CD4-positive, alpha-beta memory T cell (primary cell): ENCODE measurements at regions of chr1 and their contacts with region 1.

Region 1: DNA sequence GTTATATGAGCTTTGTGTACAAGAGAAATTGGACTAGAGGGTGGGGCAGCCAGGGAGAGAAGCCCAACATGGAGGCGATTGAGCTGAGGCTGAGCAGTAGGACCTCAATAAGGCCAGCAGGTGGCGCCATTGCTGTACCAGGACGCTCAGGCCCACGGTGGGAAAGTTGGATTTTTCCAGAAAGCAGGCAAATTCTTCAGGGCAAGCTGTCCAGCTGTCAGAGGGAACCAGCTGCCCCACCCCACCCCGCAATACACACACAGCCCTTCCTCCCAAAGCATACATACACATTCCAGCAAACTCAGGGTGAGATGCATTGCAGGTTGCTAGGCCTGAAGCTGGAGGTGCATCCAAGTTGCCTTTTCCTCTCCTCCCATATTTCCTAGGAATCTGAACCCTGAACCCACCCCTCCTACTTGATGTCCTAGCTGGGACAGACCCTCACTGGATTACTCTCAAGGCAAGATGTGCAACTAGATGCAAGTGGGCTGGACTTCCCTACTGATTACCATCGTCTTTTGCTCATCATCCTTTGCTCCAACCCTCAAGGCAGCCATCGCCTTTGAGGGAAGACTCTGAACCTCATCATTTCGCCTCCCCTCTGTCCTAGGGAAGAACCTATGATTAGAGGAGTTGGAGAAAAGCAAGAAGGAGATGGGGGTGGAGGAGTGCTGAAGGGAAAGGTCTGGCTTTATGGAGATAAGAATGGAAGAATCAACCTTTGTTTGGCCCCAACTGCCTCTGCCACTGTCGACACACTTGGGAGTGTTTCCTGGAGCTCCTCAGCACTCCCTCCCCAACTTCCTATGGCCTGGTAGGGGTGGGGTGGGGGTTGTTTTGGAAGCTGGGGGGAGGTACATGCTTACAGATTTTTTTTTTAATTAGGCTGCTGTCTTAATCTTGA is 25.5 kb downstream of the CD34 start:
- DNase-seq: peak; percentile 67 to 72 (median 69)
- H3K4me3 ChIP-seq: no peak overlapping the region
- H3K4me3 Mint-ChIP-seq: peak overlapping the region in 4 of 8 donors; percentile 13 to 58 (median 26)
- H3K27ac ChIP-seq: no peak overlapping the region
- H3K27ac Mint-ChIP-seq: peak overlapping the region in 6 of 7 donors; percentile 71 to 98 (median 78)
- H3K4me1 ChIP-seq: peaks cover 32% of the 10 kb centered on the region
- H3K4me1 Mint-ChIP-seq: peaks cover 25 to 39% (median 34%) of the 10 kb centered on the region in 4 donors
- H3K27me3 ChIP-seq: no peaks in the 10 kb centered on the region
- H3K27me3 Mint-ChIP-seq: peaks cover 1 to 14% of the 10 kb centered on the region in 2 donors

Region 2: GRCh38 chr1:207811920-207812720 is 73.3 kb before region 1 on chr1:
- CTCF ChIA-PET with region 1: interaction called, 10 read pairs
- POLR2A ChIA-PET with region 1: no interaction called
- intact Hi-C with region 1: no loop called
- DNase-seq: no peak
- H3K4me3 ChIP-seq: no peak overlapping the region
- H3K4me3 Mint-ChIP-seq: peak overlapping the region in 1 of 8 donors; percentile 17
- H3K27ac ChIP-seq: no peak overlapping the region
- H3K27ac Mint-ChIP-seq: peak overlapping the region in 6 of 7 donors; percentile 13 to 85 (median 61)
- H3K4me1 ChIP-seq: peaks cover 75% of the 10 kb centered on the region
- H3K4me1 Mint-ChIP-seq: peaks cover 51 to 90% (median 74%) of the 10 kb centered on the region in 4 donors
- H3K27me3 ChIP-seq: no peaks in the 10 kb centered on the region
- H3K27me3 Mint-ChIP-seq: no peaks in the 10 kb centered on the region

Region 3: GRCh38 chr1:207863893-207864535 is 21.4 kb before region 1 on chr1:
- CTCF ChIA-PET with region 1: interaction called, 402 read pairs
- POLR2A ChIA-PET with region 1: interaction called, 157 read pairs
- intact Hi-C with region 1: loop called (anchors 2 kb)
- DNase-seq: peak; percentile 43 to 75 (median 49)
- H3K4me3 ChIP-seq: no peak overlapping the region
- H3K4me3 Mint-ChIP-seq: peak overlapping the region; percentile 45 to 89 (median 72)
- H3K27ac ChIP-seq: peak overlapping the region; percentile 48
- H3K27ac Mint-ChIP-seq: peak overlapping the region; percentile 73 to 95 (median 86)
- H3K4me1 ChIP-seq: peaks cover 88% of the 10 kb centered on the region
- H3K4me1 Mint-ChIP-seq: peaks cover 55 to 74% (median 60%) of the 10 kb centered on the region in 4 donors
- H3K27me3 ChIP-seq: no peaks in the 10 kb centered on the region
- H3K27me3 Mint-ChIP-seq: no peaks in the 10 kb centered on the region

Region 4: GRCh38 chr1:207897188-207897587 is 11.8 kb after region 1 on chr1:
- CTCF ChIA-PET with region 1: interaction called, 44 read pairs
- POLR2A ChIA-PET with region 1: no interaction called
- intact Hi-C with region 1: no loop called
- DNase-seq: no peak
- H3K4me3 ChIP-seq: no peak overlapping the region
- H3K4me3 Mint-ChIP-seq: no peak overlapping the region
- H3K27ac ChIP-seq: no peak overlapping the region
- H3K27ac Mint-ChIP-seq: no peak overlapping the region
- H3K4me1 ChIP-seq: no peaks in the 10 kb centered on the region
- H3K4me1 Mint-ChIP-seq: no peaks in the 10 kb centered on the region
- H3K27me3 ChIP-seq: no peaks in the 10 kb centered on the region
- H3K27me3 Mint-ChIP-seq: peaks cover 0 to 3% of the 10 kb centered on the region in 2 donors

Region 5: GRCh38 chr1:207917080-207917479 is 31.7 kb after region 1 on chr1:
- CTCF ChIA-PET with region 1: interaction called, 13 read pairs
- POLR2A ChIA-PET with region 1: no interaction called
- intact Hi-C with region 1: no loop called
- DNase-seq: no peak
- H3K4me3 ChIP-seq: no peak overlapping the region
- H3K4me3 Mint-ChIP-seq: no peak overlapping the region
- H3K27ac ChIP-seq: no peak overlapping the region
- H3K27ac Mint-ChIP-seq: no peak overlapping the region
- H3K4me1 ChIP-seq: no peaks in the 10 kb centered on the region
- H3K4me1 Mint-ChIP-seq: peaks cover 0 to 3% (median 0%) of the 10 kb centered on the region in 4 donors
- H3K27me3 ChIP-seq: peaks cover 3% of the 10 kb centered on the region
- H3K27me3 Mint-ChIP-seq: peaks cover 29 to 33% of the 10 kb centered on the region in 2 donors

Region 6: DNA sequence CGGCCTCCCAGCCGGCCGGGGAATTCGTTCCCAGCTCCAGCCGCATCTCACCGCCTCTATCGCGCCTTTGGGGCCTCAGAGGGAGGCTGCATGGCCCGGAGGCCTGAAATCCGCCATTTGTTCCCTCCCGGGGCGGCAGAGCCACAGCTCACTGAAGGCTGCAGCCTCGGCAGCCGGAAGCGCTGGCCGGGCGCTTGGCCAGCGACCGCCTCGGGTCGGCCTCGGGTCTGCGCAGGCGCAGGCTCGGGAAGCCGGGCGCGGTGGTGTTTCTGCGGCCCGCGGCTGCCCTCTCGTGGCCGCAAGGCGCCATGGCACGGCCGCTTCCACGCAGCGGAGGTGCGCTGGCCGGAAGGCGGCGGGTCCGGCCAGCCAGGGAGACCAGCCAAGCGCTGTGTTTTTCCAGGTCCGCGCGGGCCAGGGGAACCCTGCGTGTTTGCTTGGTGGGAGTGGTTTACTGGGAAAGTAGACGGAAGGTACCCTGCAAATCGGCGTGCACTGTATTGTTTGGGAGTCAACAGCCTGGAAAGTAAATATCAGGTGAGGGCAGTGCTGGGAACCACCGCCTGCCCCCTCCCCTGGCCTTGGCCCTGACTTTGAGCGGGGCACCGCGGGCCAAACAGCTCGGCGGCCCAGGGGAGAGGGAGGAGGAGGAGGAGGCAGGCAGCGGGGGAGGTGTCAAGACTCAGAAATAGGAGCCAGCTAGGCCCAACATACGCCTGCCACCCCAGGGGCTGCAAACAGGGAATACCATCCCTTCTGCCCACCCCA is 78.2 kb after region 1 on chr1:
- CTCF ChIA-PET with region 1: interaction called, 119 read pairs
- POLR2A ChIA-PET with region 1: interaction called, 28 read pairs
- intact Hi-C with region 1: loop called (anchors 1 kb)
- DNase-seq: peak; percentile 66 to 85 (median 80)
- H3K4me3 ChIP-seq: peak overlapping the region; percentile 27 to 86
- H3K4me3 Mint-ChIP-seq: peak overlapping the region; percentile 81 to 93 (median 87)
- H3K27ac ChIP-seq: peak overlapping the region; percentile 48
- H3K27ac Mint-ChIP-seq: peak overlapping the region in 2 of 7 donors; percentile 17 to 33
- H3K4me1 ChIP-seq: peaks cover 21% of the 10 kb centered on the region
- H3K4me1 Mint-ChIP-seq: peaks cover 4 to 22% (median 14%) of the 10 kb centered on the region in 4 donors
- H3K27me3 ChIP-seq: peaks cover 14% of the 10 kb centered on the region
- H3K27me3 Mint-ChIP-seq: peaks cover 19 to 27% of the 10 kb centered on the region in 2 donors

Region 7: GRCh38 chr1:207997486-207998268 is 112.3 kb after region 1 on chr1:
- CTCF ChIA-PET with region 1: interaction called, 26 read pairs
- POLR2A ChIA-PET with region 1: no interaction called
- intact Hi-C with region 1: no loop called
- DNase-seq: peak in 4 of 5 donors; percentile 20 to 36 (median 30)
- H3K4me3 ChIP-seq: no peak overlapping the region
- H3K4me3 Mint-ChIP-seq: no peak overlapping the region
- H3K27ac ChIP-seq: no peak overlapping the region
- H3K27ac Mint-ChIP-seq: no peak overlapping the region
- H3K4me1 ChIP-seq: no peaks in the 10 kb centered on the region
- H3K4me1 Mint-ChIP-seq: no peaks in the 10 kb centered on the region
- H3K27me3 ChIP-seq: no peaks in the 10 kb centered on the region
- H3K27me3 Mint-ChIP-seq: peaks cover 4% of the 10 kb centered on the region in 2 donors